Mammary epithelial cell (primary cell): ENCODE measurements at regions of chr20 and their contacts with region 1.

Region 1: DNA sequence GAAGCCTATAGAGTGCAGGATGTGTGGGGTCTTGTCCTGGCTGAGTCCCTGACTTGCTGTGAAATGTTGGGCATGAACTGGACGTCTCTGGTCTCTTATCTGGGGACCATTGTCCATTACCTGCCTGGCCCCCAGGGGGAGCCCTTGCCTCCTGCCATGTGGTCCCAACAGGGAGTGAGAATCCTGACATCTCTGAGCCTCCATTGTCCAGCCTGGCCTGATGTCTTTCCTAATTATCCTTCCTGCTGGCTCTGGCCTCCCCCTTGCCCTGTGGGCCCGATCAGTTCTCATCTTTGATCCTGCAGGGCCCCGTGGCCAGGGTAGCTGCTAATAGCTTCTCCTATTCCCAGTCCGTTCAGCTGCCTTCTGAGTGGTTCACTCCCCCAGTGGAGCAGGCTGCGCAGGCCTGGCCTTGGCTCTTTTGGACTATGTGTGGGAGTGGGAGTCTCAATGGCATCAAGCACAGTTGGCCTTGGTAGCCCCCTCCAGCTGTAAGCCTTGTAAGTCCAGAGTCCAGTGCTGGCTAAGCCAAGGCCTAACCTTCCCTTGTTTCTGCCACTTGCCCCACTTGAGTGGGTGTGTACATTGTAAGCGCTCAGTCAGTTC is 77.9 kb upstream of the RALY start:
- DNase-seq: peak; percentile 15
- H3K4me3 ChIP-seq: no peak overlapping the region
- H3K27ac ChIP-seq: no peak overlapping the region
- H3K4me1 ChIP-seq: peaks cover 3% of the 10 kb centered on the region
- H3K27me3 ChIP-seq: no peaks in the 10 kb centered on the region
- CTCF ChIP-seq: peak; percentile 74 to 77

Region 2: GRCh38 chr20:33810885-33811777 is 104.7 kb before region 1 on chr20 and contains the start of gene CHMP4B:
- CTCF ChIA-PET with region 1: interaction called, 10 read pairs
- dilution Hi-C with region 1: no loop called
- in situ Hi-C with region 1: no loop called
- intact Hi-C with region 1: no loop called
- DNase-seq: peak; percentile 98
- H3K4me3 ChIP-seq: peak within 1 kb of the TSS; percentile 72 to 86 (median 81)
- H3K27ac ChIP-seq: peak within 1 kb of the TSS; percentile 97
- H3K4me1 ChIP-seq: peaks cover 8% of the 10 kb centered on the region
- H3K27me3 ChIP-seq: no peaks in the 10 kb centered on the region
- CTCF ChIP-seq: no peak
- total RNA-seq, gene CHMP4B: 24.2 to 72.4 TPM

Region 3: GRCh38 chr20:33862709-33863403 is 53.0 kb before region 1 on chr20:
- CTCF ChIA-PET with region 1: interaction called, 5 read pairs
- dilution Hi-C with region 1: no loop called
- in situ Hi-C with region 1: no loop called
- intact Hi-C with region 1: loop called (anchors 1 kb)
- DNase-seq: no peak
- H3K4me3 ChIP-seq: no peak overlapping the region
- H3K27ac ChIP-seq: no peak overlapping the region
- H3K4me1 ChIP-seq: peaks cover 4% of the 10 kb centered on the region
- H3K27me3 ChIP-seq: no peaks in the 10 kb centered on the region
- CTCF ChIP-seq: peak; percentile 58 to 81

Region 4: DNA sequence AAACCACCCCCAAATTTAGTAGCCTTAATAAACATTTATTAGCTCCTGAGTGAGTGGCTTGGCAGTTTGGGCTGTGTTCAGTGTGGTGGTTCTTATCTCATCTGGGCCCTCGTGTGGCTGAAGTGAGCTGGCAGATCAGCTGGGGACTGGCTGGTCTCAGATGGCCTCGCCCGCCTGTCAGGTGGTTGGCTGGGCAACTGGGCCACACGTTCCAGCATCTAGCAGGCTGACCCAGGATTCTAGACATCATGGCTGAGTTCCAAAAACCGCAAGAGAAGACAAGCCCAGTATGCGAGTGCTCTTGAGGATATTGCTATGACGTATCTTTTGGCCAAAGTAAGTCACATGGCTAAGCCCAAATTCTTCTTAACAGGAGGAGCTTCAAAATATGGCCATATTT is 167.3 kb after region 1 on chr20:
- CTCF ChIA-PET with region 1: interaction called, 5 read pairs
- dilution Hi-C with region 1: no loop called
- in situ Hi-C with region 1: no loop called
- intact Hi-C with region 1: loop called (anchors 1 kb)
- DNase-seq: peak; percentile 98
- H3K4me3 ChIP-seq: no peak overlapping the region
- H3K27ac ChIP-seq: peak overlapping the region; percentile 11
- H3K4me1 ChIP-seq: peaks cover 19% of the 10 kb centered on the region
- H3K27me3 ChIP-seq: no peaks in the 10 kb centered on the region
- CTCF ChIP-seq: peak; percentile 15 to 28

Region 5: GRCh38 chr20:34129518-34130162 is 213.8 kb after region 1 on chr20:
- CTCF ChIA-PET with region 1: no interaction called
- dilution Hi-C with region 1: no loop called
- in situ Hi-C with region 1: no loop called
- intact Hi-C with region 1: loop called (anchors 1 kb)
- DNase-seq: peak; percentile 64
- H3K4me3 ChIP-seq: no peak overlapping the region
- H3K27ac ChIP-seq: no peak overlapping the region
- H3K4me1 ChIP-seq: peaks cover under 1% of the 10 kb centered on the region
- H3K27me3 ChIP-seq: no peaks in the 10 kb centered on the region
- CTCF ChIP-seq: peak; percentile 83 to 85